Activated naive CD4-positive, alpha-beta T cell treated with anti-CD3 and anti-CD28 coated beads for 36 hours (primary cell): ENCODE measurements at regions of chr5 and their contacts with region 1.

Region 1: GRCh38 chr5:119031905-119032304 is 39.0 kb upstream of the DMXL1 start:
- DNase-seq: peak; percentile 42
- H3K4me3 Mint-ChIP-seq: no peak overlapping the region
- H3K27ac Mint-ChIP-seq: peak overlapping the region; percentile 89
- H3K4me1 Mint-ChIP-seq: peaks cover 46% of the 10 kb centered on the region
- H3K27me3 Mint-ChIP-seq: no peaks in the 10 kb centered on the region

Region 2: DNA sequence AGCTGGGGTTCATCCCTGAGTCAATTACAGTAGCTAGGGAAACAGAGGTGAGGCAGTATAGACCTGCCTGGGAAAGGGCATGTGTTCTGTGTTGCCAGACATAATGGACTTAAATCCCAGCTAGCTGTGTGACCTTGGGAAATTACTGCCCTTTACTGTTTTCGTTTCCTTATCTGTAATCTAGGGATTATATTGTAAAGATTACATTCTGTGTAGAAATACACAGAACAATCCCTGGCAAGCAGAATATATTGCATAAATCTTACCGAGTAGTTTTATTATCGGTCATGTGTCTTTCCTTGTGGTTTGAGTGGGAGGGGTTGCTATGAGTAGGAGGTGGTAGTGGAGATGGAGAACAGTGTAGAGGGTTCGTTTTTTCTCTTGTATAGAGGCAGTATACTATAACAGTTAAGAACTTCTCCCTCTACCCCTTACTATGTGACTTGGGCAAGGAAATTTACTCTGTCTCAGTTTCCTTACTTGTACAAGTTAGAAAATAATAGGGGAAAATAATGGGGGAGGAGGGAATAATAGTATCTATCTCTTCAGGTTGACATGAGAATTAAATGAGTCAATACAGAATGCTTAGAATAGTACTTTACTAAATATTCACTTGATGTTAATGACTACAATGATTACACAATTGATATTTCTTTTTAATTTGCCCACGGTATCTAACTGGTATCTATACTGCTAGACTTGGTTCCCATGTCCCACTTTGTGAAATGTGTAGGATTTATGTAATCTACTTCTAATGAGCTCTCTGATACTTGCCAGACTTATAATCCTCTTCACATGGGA is 31.9 kb after region 1 on chr5:
- CTCF ChIA-PET with region 1: no interaction called
- intact Hi-C with region 1: loop called (anchors 1 kb)
- DNase-seq: peak; percentile 31
- H3K4me3 Mint-ChIP-seq: no peak overlapping the region
- H3K27ac Mint-ChIP-seq: no peak overlapping the region
- H3K4me1 Mint-ChIP-seq: peaks cover 13% of the 10 kb centered on the region
- H3K27me3 Mint-ChIP-seq: no peaks in the 10 kb centered on the region

Region 3: GRCh38 chr5:119079318-119079921 is 47.5 kb after region 1 on chr5:
- CTCF ChIA-PET with region 1: no interaction called
- intact Hi-C with region 1: loop called (anchors 1 kb)
- DNase-seq: peak; percentile 59
- H3K4me3 Mint-ChIP-seq: no peak overlapping the region
- H3K27ac Mint-ChIP-seq: peak overlapping the region; percentile 54
- H3K4me1 Mint-ChIP-seq: peaks cover 52% of the 10 kb centered on the region
- H3K27me3 Mint-ChIP-seq: no peaks in the 10 kb centered on the region

Region 4: GRCh38 chr5:119267958-119268386 is 236.1 kb after region 1 on chr5:
- CTCF ChIA-PET with region 1: no interaction called
- intact Hi-C with region 1: loop called (anchors 1 kb)
- DNase-seq: peak; percentile 93
- H3K4me3 Mint-ChIP-seq: peak overlapping the region; percentile 91
- H3K27ac Mint-ChIP-seq: peak overlapping the region; percentile 97
- H3K4me1 Mint-ChIP-seq: peaks cover 64% of the 10 kb centered on the region
- H3K27me3 Mint-ChIP-seq: no peaks in the 10 kb centered on the region

Region 5: GRCh38 chr5:119309326-119309725 is 277.4 kb after region 1 on chr5:
- CTCF ChIA-PET with region 1: interaction called, 6 read pairs
- intact Hi-C with region 1: loop called (anchors 2 kb)
- DNase-seq: no peak
- H3K4me3 Mint-ChIP-seq: peak overlapping the region; percentile 21
- H3K27ac Mint-ChIP-seq: peak overlapping the region; percentile 95
- H3K4me1 Mint-ChIP-seq: peaks cover 96% of the 10 kb centered on the region
- H3K27me3 Mint-ChIP-seq: no peaks in the 10 kb centered on the region